ENCODE measurements at regions of chr13 and their contacts with region 1.

Region 1: GRCh38 chr13:106471957-106472543 is 63.4 kb downstream of the EFNB2 start:
- DNase-seq: peak; percentile 58 to 72
- ATAC-seq: peak; percentile 75

Region 2: DNA sequence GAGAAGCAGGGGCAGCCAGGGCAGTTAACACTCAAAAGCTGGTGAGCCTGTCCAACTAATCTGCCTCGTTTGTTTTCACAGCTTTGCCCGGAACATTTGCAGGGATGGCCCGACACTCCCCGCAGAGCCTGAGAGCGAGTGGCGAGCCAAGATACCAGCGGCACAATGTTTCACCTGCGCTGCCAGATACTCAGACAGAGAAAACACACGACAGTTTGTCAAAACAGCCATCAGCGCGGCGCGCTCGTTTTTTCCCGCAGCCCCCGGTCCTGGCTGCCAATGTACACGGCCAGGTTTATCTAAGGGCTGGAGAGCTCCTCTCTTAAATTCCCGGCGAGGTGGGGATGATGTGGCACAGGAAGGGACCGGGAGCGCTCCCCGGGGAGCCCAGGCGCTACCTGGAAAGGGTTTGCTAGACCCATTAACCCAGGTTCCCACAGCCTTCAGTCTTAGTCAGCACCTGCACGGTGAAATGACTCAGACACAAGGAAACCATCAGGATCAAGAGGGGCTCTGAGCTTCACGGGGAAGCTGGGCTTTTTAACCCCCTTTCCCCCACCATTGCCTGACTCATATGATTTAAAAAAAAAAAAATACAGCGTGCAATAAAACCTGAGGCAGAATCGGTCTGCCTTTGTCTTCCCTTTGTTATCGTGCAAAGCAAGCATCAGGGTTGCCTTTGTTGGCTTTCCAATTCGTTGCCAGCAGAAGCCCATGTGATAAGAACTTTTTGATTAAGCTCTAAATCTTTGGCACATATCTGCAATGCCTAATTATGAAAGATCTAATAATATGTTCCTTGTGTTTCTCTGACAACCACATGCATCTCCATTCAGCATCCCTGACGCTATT is 122.7 kb before region 1 on chr13:
- intact Hi-C with region 1: loop called in 1 of 2 experiments (anchors 10 kb)
- DNase-seq: peak; percentile 49 to 71
- ATAC-seq: peak; percentile 72

Region 3: DNA sequence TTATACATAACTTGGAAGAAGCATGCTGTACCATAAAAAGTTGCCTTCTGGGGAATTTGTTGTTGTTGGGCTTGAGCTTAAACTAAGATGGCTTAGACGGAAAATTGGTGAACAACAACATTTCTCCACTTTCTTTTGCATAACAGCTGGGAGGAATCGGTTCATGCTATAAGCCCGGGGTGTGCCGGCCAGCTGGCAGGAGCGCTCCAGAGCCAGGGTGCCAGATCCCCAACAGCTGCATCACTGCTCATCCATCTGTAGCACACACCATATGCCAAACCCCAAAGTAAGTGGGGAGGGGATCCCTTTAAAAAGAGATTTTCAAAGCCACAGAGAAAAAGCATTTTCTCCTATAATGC is 515.4 kb after region 1 on chr13:
- intact Hi-C with region 1: no loop called
- DNase-seq: no peak
- ATAC-seq: no peak